Calu3 (cell line): ENCODE measurements at regions of chr17 and their contacts with region 1.

Region 1: DNA sequence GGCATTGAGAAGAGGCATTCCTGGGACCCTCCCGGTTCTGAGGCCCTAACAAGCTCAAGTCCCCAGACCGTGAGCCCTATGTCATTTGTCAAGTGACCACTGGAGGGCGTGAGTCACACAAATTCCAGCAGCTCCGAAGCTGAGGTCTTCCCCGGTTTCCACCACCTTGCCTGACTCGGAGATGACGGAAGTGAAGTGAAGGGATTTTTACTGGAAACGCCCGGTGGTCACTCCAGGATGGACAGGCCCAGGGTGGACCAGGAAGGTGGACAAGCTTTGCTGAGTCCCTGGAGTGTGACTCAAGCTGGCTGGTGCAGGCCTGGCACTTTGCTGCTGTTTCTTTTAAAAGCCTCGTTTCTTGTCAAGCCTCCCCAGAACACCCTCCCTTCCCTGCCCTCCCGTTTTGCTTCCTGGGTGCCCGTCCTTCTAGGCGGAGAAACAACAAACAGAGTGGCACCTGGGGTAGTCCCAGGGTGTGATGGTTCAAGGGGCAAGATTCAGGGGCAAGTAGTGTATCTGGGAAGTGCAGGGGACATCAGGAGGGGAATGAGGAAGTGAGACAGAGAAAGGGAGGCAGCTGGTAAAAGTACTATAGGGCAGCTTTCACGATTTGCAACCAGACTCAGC is 5.3 kb upstream of the NOS2 start:
- DNase-seq: peak; percentile 85
- H3K4me3 Mint-ChIP-seq: peak overlapping the region; percentile 55
- H3K27ac Mint-ChIP-seq: peak overlapping the region; percentile 65
- H3K4me1 Mint-ChIP-seq: peaks cover 17% of the 10 kb centered on the region
- H3K27me3 Mint-ChIP-seq: peaks cover 37% of the 10 kb centered on the region
- CTCF ChIP-seq: peak; percentile 73

Region 2: GRCh38 chr17:27879987-27880608 is 74.5 kb after region 1 on chr17:
- CTCF ChIA-PET with region 1: interaction called, 65 read pairs
- intact Hi-C with region 1: loop called (anchors 1 kb)
- DNase-seq: peak; percentile 80
- H3K4me3 Mint-ChIP-seq: no peak overlapping the region
- H3K27ac Mint-ChIP-seq: no peak overlapping the region
- H3K4me1 Mint-ChIP-seq: no peaks in the 10 kb centered on the region
- H3K27me3 Mint-ChIP-seq: peaks cover 32% of the 10 kb centered on the region
- CTCF ChIP-seq: peak; percentile 76